ENCODE measurements at regions of chr15 and their contacts with region 1.

Region 1: GRCh38 chr15:68875377-68876116 is 54.8 kb upstream of the SPESP1 start:
- DNase-seq: peak; percentile 98
- H3K4me3 ChIP-seq: peak overlapping the region in 4 of 8 donors; percentile 5 to 49 (median 24)
- H3K27ac ChIP-seq: no peak overlapping the region
- H3K4me1 ChIP-seq: peaks cover 0 to 10% (median 4%) of the 10 kb centered on the region in 6 donors
- H3K27me3 ChIP-seq: peaks cover 0 to 26% (median 2%) of the 10 kb centered on the region in 7 donors
- CTCF ChIP-seq: peak; percentile 81 to 95 (median 92)
- POLR2A ChIP-seq: no peak

Region 2: DNA sequence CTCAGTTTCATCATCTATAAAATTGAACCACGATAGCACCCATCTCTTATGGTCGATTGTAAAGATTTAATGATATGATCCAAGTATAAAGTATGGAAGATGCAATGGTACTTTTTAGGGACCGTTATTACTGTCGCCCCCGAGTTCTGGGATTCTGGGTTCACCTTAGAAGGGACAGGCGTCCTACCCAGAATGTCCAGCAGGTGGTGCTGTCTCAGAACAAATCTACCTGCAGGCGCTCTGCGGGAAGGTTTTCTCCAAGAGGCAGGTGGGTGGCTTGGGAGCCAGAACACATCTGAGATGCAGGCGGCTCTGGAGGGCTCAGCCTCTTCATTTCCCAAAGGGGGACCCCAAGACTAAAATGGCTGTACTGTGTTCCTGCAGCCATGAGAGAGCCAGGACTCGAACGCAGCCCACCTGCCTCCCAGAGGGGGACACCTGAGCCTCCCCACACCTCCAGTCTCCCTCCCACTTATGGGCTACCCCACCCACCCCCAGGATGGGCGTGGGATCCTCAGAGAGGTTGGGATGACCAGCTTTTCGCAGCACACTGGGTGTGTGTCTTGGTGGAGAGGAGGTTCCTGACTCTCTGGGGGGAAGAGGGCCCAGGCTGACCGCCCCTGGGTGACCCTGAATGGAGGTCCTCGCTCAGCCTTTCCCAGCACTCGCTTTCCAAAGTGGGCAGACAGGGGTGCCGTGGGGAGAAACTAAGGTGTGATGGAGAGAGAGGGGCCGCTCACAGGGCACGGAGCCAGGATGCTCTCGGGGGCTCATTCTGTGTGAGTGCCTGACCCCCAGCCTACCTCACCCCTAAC is 324.9 kb before region 1 on chr15:
- intact Hi-C with region 1: loop called (anchors 5 kb)
- DNase-seq: peak; percentile 87
- H3K4me3 ChIP-seq: no peak overlapping the region
- H3K27ac ChIP-seq: no peak overlapping the region
- H3K4me1 ChIP-seq: peaks cover 0 to 5% (median 0%) of the 10 kb centered on the region in 6 donors
- H3K27me3 ChIP-seq: peaks cover 0 to 54% (median 2%) of the 10 kb centered on the region in 7 donors
- CTCF ChIP-seq: peak; percentile 74 to 96 (median 90)
- POLR2A ChIP-seq: no peak

Region 3: DNA sequence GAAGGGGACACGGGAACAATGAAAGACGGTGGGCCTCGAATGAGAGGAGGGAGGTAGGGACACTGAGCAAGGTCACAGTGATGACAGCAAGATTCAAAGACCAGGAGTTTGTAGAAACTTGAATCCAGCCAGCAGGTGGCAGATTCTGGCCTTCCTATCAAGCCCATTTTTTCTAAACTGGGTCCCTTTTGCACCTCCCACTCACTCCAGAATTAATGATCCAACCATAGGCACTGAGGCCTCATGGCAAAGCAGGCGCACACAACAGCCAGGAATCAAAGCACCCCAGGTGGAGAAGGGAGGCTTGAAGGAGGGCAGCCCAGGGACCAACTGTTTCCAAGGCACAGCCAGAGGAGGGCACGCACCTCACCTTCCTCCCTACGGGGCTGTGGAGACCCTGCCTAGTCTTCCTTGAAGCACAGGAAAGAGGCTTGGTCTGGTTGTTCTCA is 145.1 kb before region 1 on chr15:
- intact Hi-C with region 1: loop called (anchors 5 kb)
- DNase-seq: no peak
- H3K4me3 ChIP-seq: no peak overlapping the region
- H3K27ac ChIP-seq: no peak overlapping the region
- H3K4me1 ChIP-seq: peaks cover 7 to 51% (median 30%) of the 10 kb centered on the region in 6 donors
- H3K27me3 ChIP-seq: no peaks in the 10 kb centered on the region
- CTCF ChIP-seq: peak; percentile 11 to 69 (median 45)
- POLR2A ChIP-seq: no peak

Region 4: GRCh38 chr15:68972201-68973065 is 96.9 kb after region 1 on chr15:
- intact Hi-C with region 1: no loop called
- DNase-seq: no peak
- H3K4me3 ChIP-seq: no peak overlapping the region
- H3K27ac ChIP-seq: no peak overlapping the region
- H3K4me1 ChIP-seq: peaks cover 0 to 6% (median 0%) of the 10 kb centered on the region in 6 donors
- H3K27me3 ChIP-seq: peaks cover 0 to 10% (median 0%) of the 10 kb centered on the region in 7 donors
- CTCF ChIP-seq: no peak
- POLR2A ChIP-seq: no peak